Activated CD4-positive, alpha-beta memory T cell treated with anti-CD3 and anti-CD28 coated beads for 36 hours (primary cell): ENCODE measurements at regions of chr15 and their contacts with region 1.

Region 1: DNA sequence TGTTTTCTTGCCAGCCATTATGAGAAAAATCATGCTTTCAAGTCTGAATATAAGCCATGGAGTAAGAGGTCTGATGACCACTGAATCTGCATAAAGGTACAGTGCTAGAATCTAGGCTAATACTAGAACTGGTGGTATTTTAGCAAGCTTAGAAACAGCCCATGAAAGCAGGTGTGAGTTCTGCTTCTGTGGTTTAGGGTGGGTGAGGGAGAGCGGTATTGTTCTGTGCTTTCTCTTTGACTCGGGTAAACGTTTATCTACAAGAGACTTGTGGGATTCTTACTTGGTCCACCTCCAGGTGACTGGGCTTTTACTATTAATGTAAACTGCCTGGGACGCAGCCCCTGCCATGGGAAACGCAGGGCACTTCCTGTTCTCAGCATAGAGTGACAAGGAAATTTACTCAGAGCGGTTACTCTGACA is 55.2 kb downstream of the PGPEP1L start:
- DNase-seq: peak; percentile 55
- H3K4me3 Mint-ChIP-seq: no peak overlapping the region
- H3K27ac Mint-ChIP-seq: peak overlapping the region; percentile 58
- H3K4me1 Mint-ChIP-seq: peaks cover 18% of the 10 kb centered on the region
- H3K27me3 Mint-ChIP-seq: no peaks in the 10 kb centered on the region

Region 2: DNA sequence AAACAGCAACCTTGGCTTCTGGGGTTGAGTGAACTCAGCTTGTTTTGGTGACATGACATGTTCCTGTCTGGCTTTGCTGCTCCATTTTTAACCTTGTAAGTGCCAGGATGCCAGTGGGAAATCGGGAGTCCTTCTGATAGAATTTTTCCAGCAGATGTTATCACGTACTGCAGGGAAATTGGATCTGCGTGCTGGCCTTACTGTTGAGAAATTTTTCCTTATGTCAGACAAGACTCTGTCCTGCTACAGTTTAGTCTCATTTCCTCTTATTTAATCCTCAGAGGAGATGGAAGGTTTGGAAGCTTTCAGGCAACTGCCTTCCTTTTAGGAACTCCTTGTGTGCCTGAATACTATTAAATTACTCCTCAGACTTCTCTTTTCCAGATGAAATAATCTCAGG is 25.4 kb before region 1 on chr15:
- CTCF ChIA-PET with region 1: no interaction called
- POLR2A ChIA-PET with region 1: no interaction called
- intact Hi-C with region 1: no loop called
- DNase-seq: no peak
- H3K4me3 Mint-ChIP-seq: no peak overlapping the region
- H3K27ac Mint-ChIP-seq: no peak overlapping the region
- H3K4me1 Mint-ChIP-seq: no peaks in the 10 kb centered on the region
- H3K27me3 Mint-ChIP-seq: no peaks in the 10 kb centered on the region

Region 3: GRCh38 chr15:98937413-98938104 is 14.8 kb before region 1 on chr15:
- CTCF ChIA-PET with region 1: no interaction called
- POLR2A ChIA-PET with region 1: no interaction called
- intact Hi-C with region 1: loop called (anchors 1 kb)
- DNase-seq: no peak
- H3K4me3 Mint-ChIP-seq: no peak overlapping the region
- H3K27ac Mint-ChIP-seq: no peak overlapping the region
- H3K4me1 Mint-ChIP-seq: peaks cover 11% of the 10 kb centered on the region
- H3K27me3 Mint-ChIP-seq: no peaks in the 10 kb centered on the region

Region 4: GRCh38 chr15:99059010-99059981 is 106.9 kb after region 1 on chr15:
- CTCF ChIA-PET with region 1: no interaction called
- POLR2A ChIA-PET with region 1: no interaction called
- intact Hi-C with region 1: loop called (anchors 2 kb)
- DNase-seq: peak; percentile 54
- H3K4me3 Mint-ChIP-seq: peak overlapping the region; percentile 49
- H3K27ac Mint-ChIP-seq: no peak overlapping the region
- H3K4me1 Mint-ChIP-seq: peaks cover 4% of the 10 kb centered on the region
- H3K27me3 Mint-ChIP-seq: peaks cover 35% of the 10 kb centered on the region